MCF 10A (cell line): ENCODE measurements at regions of chr7 and their contacts with region 1.

Region 1: GRCh38 chr7:86914551-86914950 is 144.9 kb downstream of the ELAPOR2 start:
- DNase-seq: peak; percentile 34
- H3K4me3 Mint-ChIP-seq: no peak overlapping the region
- H3K27ac Mint-ChIP-seq: no peak overlapping the region
- H3K4me1 Mint-ChIP-seq: peaks cover 7% of the 10 kb centered on the region
- H3K27me3 Mint-ChIP-seq: peaks cover 11% of the 10 kb centered on the region
- CTCF ChIP-seq: peak; percentile 40

Region 2: DNA sequence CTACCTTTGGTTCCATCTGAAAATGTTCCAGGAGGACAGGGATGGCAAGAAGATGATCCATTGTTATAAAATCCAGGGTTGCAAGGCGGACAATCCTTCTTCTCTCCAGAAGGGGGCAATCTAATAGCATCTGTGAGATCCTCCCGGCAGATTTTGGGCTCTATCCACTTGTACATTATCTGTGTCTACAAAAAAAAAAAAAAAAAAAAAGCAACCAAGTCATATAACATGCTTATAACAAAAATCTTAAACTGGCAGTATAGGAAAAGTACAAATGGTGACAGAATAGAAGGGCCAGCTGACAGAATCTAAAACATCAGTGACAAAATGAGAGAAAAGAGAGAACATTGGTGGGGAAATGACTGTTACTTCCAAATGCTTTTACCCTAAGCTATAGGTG is 12.2 kb after region 1 on chr7:
- CTCF ChIA-PET with region 1: interaction called, 15 read pairs
- POLR2A ChIA-PET with region 1: no interaction called
- intact Hi-C with region 1: no loop called
- DNase-seq: peak; percentile 66
- H3K4me3 Mint-ChIP-seq: no peak overlapping the region
- H3K27ac Mint-ChIP-seq: no peak overlapping the region
- H3K4me1 Mint-ChIP-seq: peaks cover 6% of the 10 kb centered on the region
- H3K27me3 Mint-ChIP-seq: no peaks in the 10 kb centered on the region
- CTCF ChIP-seq: peak; percentile 39

Region 3: DNA sequence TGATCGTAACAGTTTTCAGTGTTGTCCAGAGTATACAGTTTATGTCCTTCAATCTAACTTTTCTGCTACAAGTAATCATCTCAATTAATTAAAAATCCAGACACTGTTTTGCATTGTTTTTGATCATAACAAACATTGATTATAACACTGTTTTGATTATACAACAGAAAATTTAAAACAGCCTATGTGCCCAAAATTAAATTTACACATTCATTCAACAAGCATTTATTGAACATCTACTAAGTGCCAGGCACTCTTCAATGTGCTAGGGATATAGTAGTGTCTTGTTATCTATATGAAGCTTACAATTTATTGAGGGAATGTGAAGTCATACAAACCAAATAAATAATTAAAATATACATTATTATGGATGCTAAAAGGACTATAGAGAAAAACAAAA is 134.3 kb after region 1 on chr7:
- CTCF ChIA-PET with region 1: no interaction called
- POLR2A ChIA-PET with region 1: no interaction called
- intact Hi-C with region 1: no loop called
- DNase-seq: no peak
- H3K4me3 Mint-ChIP-seq: no peak overlapping the region
- H3K27ac Mint-ChIP-seq: no peak overlapping the region
- H3K4me1 Mint-ChIP-seq: no peaks in the 10 kb centered on the region
- H3K27me3 Mint-ChIP-seq: no peaks in the 10 kb centered on the region
- CTCF ChIP-seq: no peak

Region 4: DNA sequence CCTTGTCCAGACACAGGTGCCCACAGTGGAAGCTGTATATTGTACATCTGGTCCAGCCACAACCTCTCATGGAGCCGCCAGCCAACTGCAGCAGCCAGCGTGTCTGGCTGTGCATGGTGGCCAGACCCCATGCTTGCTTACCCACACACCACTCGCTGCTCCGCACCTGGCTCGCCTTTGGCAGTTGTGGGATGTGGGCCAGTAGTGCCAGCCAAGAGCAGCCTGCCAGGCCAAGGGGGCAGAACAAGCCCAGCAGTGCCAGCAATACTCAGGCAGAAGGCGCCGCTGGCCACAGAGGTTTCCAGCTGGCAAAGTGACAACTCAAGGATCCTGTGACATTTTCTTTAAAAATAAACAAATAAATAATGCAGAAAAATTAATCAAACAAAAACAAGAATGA is 316.7 kb after region 1 on chr7:
- CTCF ChIA-PET with region 1: interaction called, 6 read pairs
- POLR2A ChIA-PET with region 1: no interaction called
- intact Hi-C with region 1: loop called (anchors 1 kb)
- DNase-seq: no peak
- H3K4me3 Mint-ChIP-seq: no peak overlapping the region
- H3K27ac Mint-ChIP-seq: no peak overlapping the region
- H3K4me1 Mint-ChIP-seq: no peaks in the 10 kb centered on the region
- H3K27me3 Mint-ChIP-seq: peaks cover 12% of the 10 kb centered on the region
- CTCF ChIP-seq: no peak